HCT116 (cell line): ENCODE measurements at regions of chr11 and their contacts with region 1.

Region 1: GRCh38 chr11:43504316-43504950 is 145.7 kb downstream of the TTC17 start:
- DNase-seq: peak; percentile 12
- ATAC-seq: peak; percentile 83
- H3K4me3 ChIP-seq: no peak overlapping the region
- H3K27ac ChIP-seq: no peak overlapping the region
- H3K4me1 ChIP-seq: peaks cover 0 to 7% of the 10 kb centered on the region in 2 experiments; a peak in 1 of 4 replicates
- H3K27me3 ChIP-seq: peaks cover 8% of the 10 kb centered on the region; the same call in 1 of the 2 replicates
- CTCF ChIP-seq: peak; percentile 32 to 47 (median 45); a peak in 5 of 6 replicates
- POLR2A ChIP-seq: no peak
- RAD21 ChIP-seq: peak; percentile 60

Region 2: DNA sequence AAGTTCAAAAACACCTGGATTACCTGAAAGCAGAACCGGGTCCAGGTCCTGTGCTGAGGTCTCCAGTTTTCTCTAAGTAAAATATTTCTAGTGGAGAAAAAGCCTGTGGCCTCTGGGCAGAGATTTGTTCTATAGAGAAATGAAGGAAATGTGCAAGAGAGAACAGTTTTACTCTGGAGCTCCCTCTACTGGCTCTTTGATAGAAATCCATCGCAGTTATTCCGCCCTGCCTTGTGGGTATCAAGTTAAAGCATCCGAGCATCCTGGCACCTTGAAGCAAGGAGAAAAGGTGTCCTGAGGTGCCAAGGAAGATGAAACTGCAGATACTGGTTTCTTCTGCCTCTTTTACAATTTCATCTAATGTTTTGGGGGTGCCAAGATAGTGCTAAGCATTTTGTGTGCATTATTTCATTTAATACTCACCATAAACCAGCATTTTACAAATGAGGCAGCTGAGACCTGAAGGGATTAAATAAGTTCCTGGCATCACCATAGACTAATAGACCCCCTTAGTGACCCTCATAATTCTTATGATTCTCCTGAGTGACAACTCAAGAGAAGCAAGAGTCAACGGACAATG is 63.1 kb after region 1 on chr11:
- CTCF ChIA-PET with region 1: interaction called, 34 read pairs
- POLR2A ChIA-PET with region 1: no interaction called
- RAD21 ChIA-PET with region 1: interaction called, 5 to 6 read pairs
- intact Hi-C with region 1: no loop called
- DNase-seq: peak; percentile 41
- ATAC-seq: peak; percentile 90
- H3K4me3 ChIP-seq: no peak overlapping the region
- H3K27ac ChIP-seq: no peak overlapping the region
- H3K4me1 ChIP-seq: no peaks in the 10 kb centered on the region
- H3K27me3 ChIP-seq: peaks cover 56% of the 10 kb centered on the region
- CTCF ChIP-seq: peak; percentile 38 to 75 (median 71); a peak in 5 of 6 replicates
- POLR2A ChIP-seq: no peak
- RAD21 ChIP-seq: peak; percentile 51

Region 3: GRCh38 chr11:43573233-43573632 is 68.8 kb after region 1 on chr11:
- CTCF ChIA-PET with region 1: interaction called, 22 read pairs
- POLR2A ChIA-PET with region 1: no interaction called
- RAD21 ChIA-PET with region 1: interaction called in 1 of 2 experiments, 6 read pairs
- intact Hi-C with region 1: loop called (anchors 1 kb)
- DNase-seq: peak; percentile 16
- ATAC-seq: peak; percentile 80
- H3K4me3 ChIP-seq: no peak overlapping the region
- H3K27ac ChIP-seq: no peak overlapping the region
- H3K4me1 ChIP-seq: no peaks in the 10 kb centered on the region
- H3K27me3 ChIP-seq: peaks cover 42% of the 10 kb centered on the region
- CTCF ChIP-seq: peak; percentile 23 to 86 (median 71); a peak in 5 of 6 replicates
- POLR2A ChIP-seq: no peak
- RAD21 ChIP-seq: peak; percentile 49

Region 4: DNA sequence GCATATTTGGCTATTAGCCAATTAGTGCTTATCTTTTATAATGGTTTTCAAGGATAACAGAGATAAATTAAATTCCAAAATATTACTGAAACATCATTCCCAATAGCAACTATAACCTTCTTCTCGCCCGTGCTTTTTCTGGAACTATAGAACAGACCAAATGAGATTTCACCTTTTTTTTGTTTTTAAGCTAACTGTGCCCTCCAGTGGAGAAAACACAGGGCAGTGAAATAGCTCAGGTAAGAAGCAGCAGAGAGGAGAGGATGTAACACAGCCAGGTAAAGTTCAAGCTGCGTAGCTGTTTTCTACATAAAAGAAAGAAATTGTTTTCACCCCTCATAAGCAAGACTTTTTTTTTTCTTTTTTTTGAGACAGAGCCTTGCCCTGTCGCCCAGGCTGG is 204.3 kb after region 1 on chr11:
- CTCF ChIA-PET with region 1: interaction called, 8 read pairs
- POLR2A ChIA-PET with region 1: no interaction called
- RAD21 ChIA-PET with region 1: no interaction called
- intact Hi-C with region 1: loop called (anchors 1 kb)
- DNase-seq: no peak
- ATAC-seq: peak; percentile 40; the same call in 1 of the 2 replicates
- H3K4me3 ChIP-seq: no peak overlapping the region
- H3K27ac ChIP-seq: no peak overlapping the region
- H3K4me1 ChIP-seq: no peaks in the 10 kb centered on the region
- H3K27me3 ChIP-seq: no peaks in the 10 kb centered on the region
- CTCF ChIP-seq: peak in 2 of 3 experiments; percentile 38 to 47; a peak in 4 of 6 replicates
- POLR2A ChIP-seq: no peak
- RAD21 ChIP-seq: peak; percentile 27; the same call in 1 of the 2 replicates

Region 5: GRCh38 chr11:44036811-44037657 is 532.6 kb after region 1 on chr11:
- CTCF ChIA-PET with region 1: no interaction called
- POLR2A ChIA-PET with region 1: no interaction called
- RAD21 ChIA-PET with region 1: no interaction called
- intact Hi-C with region 1: loop called (anchors 1 kb)
- DNase-seq: peak; percentile 61
- ATAC-seq: peak; percentile 98
- H3K4me3 ChIP-seq: no peak overlapping the region
- H3K27ac ChIP-seq: no peak overlapping the region
- H3K4me1 ChIP-seq: peaks cover 0 to 3% of the 10 kb centered on the region in 2 experiments; a peak in 1 of 4 replicates
- H3K27me3 ChIP-seq: no peaks in the 10 kb centered on the region
- CTCF ChIP-seq: peak; percentile 77 to 87 (median 83)
- POLR2A ChIP-seq: no peak
- RAD21 ChIP-seq: peak; percentile 90